ENCODE measurements at regions of chr7 and their contacts with region 1.

Region 1: GRCh38 chr7:155205368-155206317 is 92.0 kb upstream of the INSIG1 start:
- H3K4me3 Mint-ChIP-seq: peak overlapping the region; percentile 79
- H3K27ac Mint-ChIP-seq: peak overlapping the region; percentile 97
- H3K4me1 Mint-ChIP-seq: peaks cover 88% of the 10 kb centered on the region
- H3K27me3 Mint-ChIP-seq: no peaks in the 10 kb centered on the region

Region 2: DNA sequence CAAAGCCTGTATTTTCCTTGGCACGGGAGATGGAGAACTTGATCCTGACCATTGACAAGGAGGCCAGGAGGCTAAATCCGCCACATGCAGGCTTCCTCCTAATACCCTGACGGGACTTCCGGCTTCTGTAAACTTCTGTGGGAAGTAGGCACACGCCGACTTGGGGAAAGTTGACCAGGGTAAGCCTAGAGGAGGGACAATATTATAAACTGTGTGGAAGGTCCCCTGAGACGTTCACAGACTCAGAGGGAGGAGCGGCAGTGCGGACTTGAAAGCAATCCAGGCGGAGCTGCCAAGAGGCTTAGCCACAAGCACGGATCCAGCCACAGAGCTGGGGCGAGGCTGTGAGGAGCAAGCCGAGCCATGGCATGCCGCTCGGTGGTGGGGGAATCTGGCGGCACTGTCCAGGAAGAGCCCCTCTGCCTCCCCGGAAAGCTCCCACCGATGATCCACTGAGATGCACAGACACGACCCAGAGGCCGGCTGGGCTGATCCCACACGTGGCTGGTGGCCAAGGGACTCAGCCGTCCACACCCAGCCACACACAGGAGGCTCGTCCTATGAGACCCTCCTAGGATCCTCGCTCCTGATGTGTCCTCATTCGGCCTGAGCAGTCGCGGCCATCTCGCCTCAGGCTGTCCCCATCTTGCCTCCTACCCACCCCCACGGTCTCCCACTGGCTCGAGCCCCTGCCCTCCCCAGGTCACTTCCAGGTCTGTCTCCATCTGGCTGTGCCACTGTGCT is 52.0 kb after region 1 on chr7:
- intact Hi-C with region 1: loop called (anchors 5 kb)
- H3K4me3 Mint-ChIP-seq: no peak overlapping the region
- H3K27ac Mint-ChIP-seq: peak overlapping the region; percentile 30
- H3K4me1 Mint-ChIP-seq: peaks cover 36% of the 10 kb centered on the region
- H3K27me3 Mint-ChIP-seq: peaks cover 21% of the 10 kb centered on the region

Region 3: GRCh38 chr7:155752756-155753445 is 547.3 kb after region 1 on chr7:
- intact Hi-C with region 1: loop called (anchors 10 kb)
- H3K4me3 Mint-ChIP-seq: peak overlapping the region; percentile 45
- H3K27ac Mint-ChIP-seq: peak overlapping the region; percentile 64
- H3K4me1 Mint-ChIP-seq: peaks cover 77% of the 10 kb centered on the region
- H3K27me3 Mint-ChIP-seq: no peaks in the 10 kb centered on the region

Measured in dendritic cell treated with granulocyte-macrophage colony-stimulating factor and Interleukin-4, amounts not matched to agents 40 ng/mL and 50 ng/mL, for 4 days (primary cell).